Transverse colon (tissue), 4 donors: ENCODE measurements at regions of chr10 and their contacts with region 1.

Region 1: DNA sequence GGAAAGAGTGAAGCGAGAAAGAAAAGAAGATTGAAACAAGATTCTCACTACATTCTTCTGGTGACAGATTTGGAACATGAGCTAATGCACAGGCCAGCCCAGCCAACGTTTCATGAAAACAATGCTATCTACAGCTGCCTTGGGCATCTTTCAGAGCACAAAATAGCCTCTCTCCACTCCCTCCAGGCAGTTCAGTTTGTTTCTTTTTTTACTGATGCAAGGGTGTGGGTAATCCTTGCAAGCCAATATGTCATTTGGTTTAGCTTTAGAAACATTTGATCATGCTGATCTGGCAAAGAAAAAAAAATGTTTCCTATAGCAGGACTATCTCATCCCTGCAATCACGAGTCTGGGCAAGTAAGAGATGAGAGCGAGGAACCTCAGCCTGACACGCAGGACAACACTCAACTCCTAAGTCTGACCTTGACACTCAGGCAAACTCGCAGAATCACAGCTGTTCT is 35.9 kb downstream of the SVIL start:
- DNase-seq: no peak
- H3K4me3 ChIP-seq: no peak overlapping the region
- H3K27ac ChIP-seq: peak overlapping the region; percentile 31 to 66 (median 51)
- H3K4me1 ChIP-seq: peaks cover 0 to 22% (median 6%) of the 10 kb centered on the region in 4 donors
- H3K27me3 ChIP-seq: no peaks in the 10 kb centered on the region
- CTCF ChIP-seq: no peak
- EP300 ChIP-seq: no peak
- POLR2A ChIP-seq: no peak

Region 2: DNA sequence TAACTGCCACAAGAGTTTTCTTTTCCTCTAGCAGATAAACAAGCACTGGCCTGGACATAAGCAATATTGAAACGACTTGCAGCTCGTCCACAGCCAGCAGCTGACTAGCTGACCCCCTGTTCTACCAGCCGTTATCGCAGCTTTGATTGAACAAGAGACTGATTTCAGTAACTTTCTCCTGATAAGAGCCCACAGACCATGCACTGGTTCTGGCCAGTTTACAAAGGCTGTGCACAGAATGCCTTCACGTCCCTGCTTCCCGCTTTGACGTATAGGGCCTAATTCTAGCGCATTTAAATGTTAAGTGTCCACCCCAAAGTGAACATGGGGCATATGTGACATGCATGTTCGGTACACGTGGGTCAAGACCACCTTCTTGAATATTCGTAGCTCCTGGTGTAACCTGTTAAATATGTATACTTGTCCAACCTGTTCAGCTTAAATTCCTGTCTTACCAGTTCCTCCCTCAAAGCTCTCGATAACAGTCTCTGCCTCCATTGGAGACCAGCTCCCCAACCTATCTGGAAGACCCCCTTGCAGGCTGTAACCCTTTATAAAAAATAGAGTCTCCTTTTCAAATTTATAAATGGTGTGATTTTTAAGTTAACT is 240.8 kb before region 1 on chr10:
- in situ Hi-C with region 1: no loop called
- intact Hi-C with region 1: no loop called
- DNase-seq: no peak
- H3K4me3 ChIP-seq: no peak overlapping the region
- H3K27ac ChIP-seq: no peak overlapping the region
- H3K4me1 ChIP-seq: peaks cover 0 to under 1% (median 0%) of the 10 kb centered on the region in 4 donors
- H3K27me3 ChIP-seq: no peaks in the 10 kb centered on the region
- CTCF ChIP-seq: no peak
- EP300 ChIP-seq: no peak
- POLR2A ChIP-seq: no peak

Region 3: GRCh38 chr10:29409241-29410057 is 189.4 kb before region 1 on chr10:
- in situ Hi-C with region 1: no loop called
- intact Hi-C with region 1: no loop called
- DNase-seq: peak; percentile 80
- H3K4me3 ChIP-seq: peak overlapping the region; percentile 67 to 92 (median 74)
- H3K27ac ChIP-seq: peak overlapping the region; percentile 92 to 97 (median 96)
- H3K4me1 ChIP-seq: peaks cover 0 to 44% (median 31%) of the 10 kb centered on the region in 4 donors
- H3K27me3 ChIP-seq: no peaks in the 10 kb centered on the region
- CTCF ChIP-seq: peak in 1 of 5 experiments; percentile 30
- EP300 ChIP-seq: no peak
- POLR2A ChIP-seq: peak; percentile 89

Region 4: DNA sequence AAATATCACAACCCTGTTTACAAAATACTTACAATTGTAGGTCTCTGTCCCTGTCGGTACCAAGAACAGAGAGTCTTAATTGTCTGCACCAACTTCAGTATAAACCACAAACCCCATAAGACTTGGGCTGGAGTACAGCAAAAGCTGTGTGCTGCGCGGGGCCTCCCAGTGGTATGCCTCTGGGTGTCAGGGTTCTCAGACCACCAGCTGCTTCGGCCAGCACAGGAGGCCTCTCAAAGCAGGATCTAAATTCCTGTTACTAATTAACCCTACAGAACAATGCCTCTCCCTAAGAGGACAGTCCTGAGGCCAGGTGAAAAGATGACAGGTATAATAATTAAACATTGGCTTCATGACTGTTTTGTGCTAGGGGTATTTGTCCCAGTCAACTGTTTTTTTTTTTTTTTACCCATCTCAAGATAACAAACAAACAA is 36.8 kb after region 1 on chr10:
- in situ Hi-C with region 1: no loop called
- intact Hi-C with region 1: no loop called
- DNase-seq: no peak
- H3K4me3 ChIP-seq: peak overlapping the region in 2 of 4 donors; percentile 8 to 11
- H3K27ac ChIP-seq: peak overlapping the region; percentile 85 to 90 (median 88)
- H3K4me1 ChIP-seq: peaks cover 12 to 58% (median 39%) of the 10 kb centered on the region in 4 donors
- H3K27me3 ChIP-seq: no peaks in the 10 kb centered on the region
- CTCF ChIP-seq: no peak
- EP300 ChIP-seq: no peak
- POLR2A ChIP-seq: no peak

Region 5: GRCh38 chr10:29725133-29725720 is 126.3 kb after region 1 on chr10:
- in situ Hi-C with region 1: no loop called
- intact Hi-C with region 1: loop called (anchors 10 kb)
- DNase-seq: peak; percentile 37
- H3K4me3 ChIP-seq: no peak overlapping the region
- H3K27ac ChIP-seq: peak overlapping the region; percentile 67 to 99 (median 83)
- H3K4me1 ChIP-seq: peaks cover 12 to 58% (median 36%) of the 10 kb centered on the region in 4 donors
- H3K27me3 ChIP-seq: no peaks in the 10 kb centered on the region
- CTCF ChIP-seq: no peak
- EP300 ChIP-seq: no peak
- POLR2A ChIP-seq: no peak